ENCODE measurements at regions of chr11 and their contacts with region 1.

Region 1: GRCh38 chr11:10653926-10654810 is 39.4 kb downstream of the IRAG1 start:
- DNase-seq: no peak
- ATAC-seq: peak; percentile 80

Region 2: GRCh38 chr11:10272132-10272531 is 382.0 kb before region 1 on chr11:
- intact Hi-C with region 1: no loop called
- DNase-seq: no peak
- ATAC-seq: no peak

Region 3: DNA sequence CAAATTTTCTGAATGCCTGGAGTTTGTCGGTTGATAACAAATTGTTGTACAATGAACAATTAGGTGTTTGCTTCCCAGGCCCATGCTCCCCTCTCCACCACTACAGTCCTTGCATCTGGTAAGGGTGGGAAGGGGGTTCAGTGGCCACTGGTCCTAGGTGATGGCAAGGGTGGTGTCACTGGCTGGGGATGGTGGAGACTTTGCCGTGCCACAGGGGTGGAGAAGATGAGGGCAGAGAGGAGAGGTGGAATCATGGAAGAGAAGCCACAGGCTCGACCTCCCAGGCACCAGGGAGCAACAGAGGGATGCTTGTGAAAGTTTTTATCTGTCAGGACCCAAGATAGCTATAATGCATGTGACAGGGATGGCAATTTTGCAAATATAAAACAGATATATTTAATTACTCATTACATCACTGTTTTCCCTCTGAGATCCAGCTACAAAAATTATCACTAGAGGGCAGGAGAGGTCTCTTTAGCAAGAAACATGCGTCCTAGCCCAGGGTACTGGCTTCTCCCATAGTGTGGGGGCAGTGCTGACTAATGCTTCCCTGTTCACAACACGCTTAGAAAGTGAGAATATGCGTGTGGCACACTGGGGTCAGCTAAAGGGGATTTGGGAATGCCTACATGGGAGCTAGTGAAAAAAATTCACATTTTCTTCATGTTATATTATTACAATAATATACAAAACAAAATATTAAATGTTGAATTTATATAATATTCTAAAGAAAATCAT is 248.1 kb before region 1 on chr11:
- intact Hi-C with region 1: loop called (anchors 10 kb)
- DNase-seq: peak; percentile 69
- ATAC-seq: peak; percentile 92

Region 4: DNA sequence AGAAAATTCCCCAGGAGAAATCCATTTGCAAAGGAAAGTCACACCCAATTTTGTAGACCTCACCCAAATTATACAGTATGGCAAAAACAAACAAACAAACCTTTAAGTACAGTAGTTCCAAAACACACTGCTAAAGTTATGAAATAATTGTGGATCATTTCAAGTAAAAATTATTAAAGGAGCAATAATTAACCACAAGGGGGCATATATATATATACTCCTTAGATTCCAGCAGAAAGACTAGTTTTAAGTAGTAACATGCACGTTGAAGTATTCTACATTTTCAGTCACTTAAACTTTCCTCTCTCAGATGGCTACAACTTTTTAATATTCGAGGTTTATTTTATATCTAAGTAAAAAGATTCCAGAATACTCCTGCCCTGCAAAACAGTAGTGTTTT is 140.0 kb before region 1 on chr11:
- intact Hi-C with region 1: loop called (anchors 10 kb)
- DNase-seq: no peak
- ATAC-seq: no peak